OCI-LY7 (cell line): ENCODE measurements at regions of chr7 and their contacts with region 1.

Region 1: GRCh38 chr7:102404005-102404861 is 8.1 kb downstream of the PRKRIP1 start:
- DNase-seq: peak; percentile 89
- H3K4me3 ChIP-seq: no peak overlapping the region
- H3K27ac ChIP-seq: peak overlapping the region; percentile 62
- H3K4me1 ChIP-seq: peaks cover 55% of the 10 kb centered on the region
- CTCF ChIP-seq: peak; percentile 82

Region 2: DNA sequence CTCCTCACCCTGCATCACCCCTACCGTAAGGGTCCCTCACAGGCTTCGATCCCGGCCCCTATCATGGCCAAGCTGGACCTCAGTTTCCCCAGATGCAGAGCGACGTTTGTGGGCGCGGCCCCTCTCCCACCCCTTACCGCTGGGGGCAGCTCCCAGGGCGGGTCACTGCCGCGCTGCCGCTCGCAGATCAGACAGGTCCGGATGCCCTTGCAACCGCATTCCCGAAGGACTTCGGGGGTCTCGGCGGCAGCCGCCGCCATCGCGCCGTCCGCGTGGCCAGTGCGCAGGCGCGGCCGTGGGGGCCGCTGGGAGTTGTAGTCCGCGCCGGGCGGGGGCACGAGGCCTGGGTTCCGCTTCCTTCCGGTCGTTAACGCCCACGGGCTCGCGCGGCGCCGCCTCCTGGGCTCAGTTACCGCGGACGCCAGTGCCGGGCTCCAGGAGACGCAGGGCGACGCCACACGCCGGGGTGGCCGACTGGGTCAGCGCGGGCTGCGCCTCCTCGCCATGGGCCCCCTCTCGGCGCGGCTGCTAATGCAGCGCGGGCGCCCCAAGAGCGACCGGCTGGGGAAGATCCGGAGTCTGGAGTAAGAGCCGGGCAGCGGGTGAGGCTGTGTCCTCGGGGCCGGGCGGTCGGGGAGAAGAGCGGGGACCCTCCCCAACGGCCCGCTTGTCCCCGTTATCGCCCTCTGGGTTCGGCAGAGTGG is 60.5 kb after region 1 on chr7 and contains the starts of genes ALKBH4 and LRWD1:
- CTCF ChIA-PET with region 1: interaction called, 3 read pairs
- POLR2A ChIA-PET with region 1: interaction called, 4 read pairs
- intact Hi-C with region 1: loop called (anchors 2 kb)
- DNase-seq: peak; percentile 95
- H3K4me3 ChIP-seq: peak within 1 kb of the TSS; percentile 97
- H3K27ac ChIP-seq: peak within 1 kb of the TSS; percentile 43
- H3K4me1 ChIP-seq: peaks cover 20% of the 10 kb centered on the region
- CTCF ChIP-seq: 0 out of 2 replicates have a peak, but pooled peaks have one; percentile 36
- total RNA-seq, gene ALKBH4: 17.5 and 23.6 TPM in 2 replicates
- total RNA-seq, gene LRWD1: 63.1 and 68.2 TPM in 2 replicates

Region 3: DNA sequence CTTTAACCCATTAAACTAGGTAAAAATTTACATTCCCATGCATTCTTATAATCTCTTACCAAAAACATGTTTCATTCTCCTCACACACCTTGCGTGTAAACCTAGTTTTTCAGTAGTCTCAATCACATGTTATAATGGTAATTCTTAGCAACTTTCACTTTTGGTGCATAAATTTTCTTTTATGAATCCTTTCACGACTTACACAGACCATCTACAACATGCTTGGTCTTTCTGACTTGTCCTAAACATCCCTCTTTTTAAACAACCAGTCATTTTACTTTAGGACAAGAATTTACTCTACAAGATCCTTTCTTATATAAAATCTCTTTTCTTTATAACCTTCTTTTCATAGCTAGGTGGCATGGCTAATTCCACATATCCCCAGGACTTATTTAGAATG is 644.6 kb after region 1 on chr7:
- CTCF ChIA-PET with region 1: no interaction called
- POLR2A ChIA-PET with region 1: no interaction called
- intact Hi-C with region 1: no loop called
- DNase-seq: peak; percentile 52
- H3K4me3 ChIP-seq: no peak overlapping the region
- H3K27ac ChIP-seq: no peak overlapping the region
- H3K4me1 ChIP-seq: no peaks in the 10 kb centered on the region
- CTCF ChIP-seq: no peak